H1 (cell line): ENCODE measurements at regions of chr11 and their contacts with region 1.

Region 1: DNA sequence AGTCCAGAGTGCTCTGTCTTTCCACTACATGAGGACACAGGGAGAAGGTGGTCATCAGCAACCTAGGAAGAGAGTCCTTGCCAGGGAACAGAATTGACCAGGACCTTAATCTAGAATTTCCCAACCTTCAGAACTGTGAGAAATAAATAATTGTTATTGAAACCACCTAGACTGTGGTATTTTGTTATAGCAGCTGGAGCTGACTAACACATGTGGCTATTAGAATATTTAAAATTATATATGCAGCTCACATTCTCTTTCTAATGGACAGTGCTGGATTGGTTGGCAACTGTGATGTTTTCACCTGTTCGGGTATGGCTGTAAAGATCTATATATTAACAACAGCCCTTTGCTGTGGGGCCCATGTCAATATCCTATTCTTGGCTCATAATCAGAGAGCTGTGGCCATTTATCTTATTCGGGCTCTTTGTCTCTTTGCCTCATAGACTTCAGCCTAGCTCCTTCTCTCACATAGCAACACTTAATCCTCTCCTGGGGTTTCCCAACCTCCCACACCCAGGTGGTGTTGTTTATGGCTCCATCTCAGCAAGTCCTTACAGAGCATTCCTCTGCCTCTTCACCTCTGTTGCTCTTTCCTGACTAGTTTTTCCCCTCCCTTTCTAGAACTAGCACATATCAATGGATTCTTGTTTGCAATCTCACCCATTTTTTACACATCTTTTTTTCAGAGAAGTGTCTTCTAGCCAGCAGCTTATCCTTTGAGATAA is 46.4 kb upstream of the AMOTL1 start:
- DNase-seq: no peak
- H3K4me3 ChIP-seq: no peak overlapping the region
- H3K27ac ChIP-seq: no peak overlapping the region
- H3K4me1 ChIP-seq: peaks cover 0 to 2% (median 0%) of the 10 kb centered on the region in 4 experiments; a peak in 1 of 7 replicates
- H3K27me3 ChIP-seq: no peaks in the 10 kb centered on the region
- CTCF ChIP-seq: no peak
- EP300 ChIP-seq: no peak
- POLR2A ChIP-seq: no peak
- RAD21 ChIP-seq: no peak

Region 2: DNA sequence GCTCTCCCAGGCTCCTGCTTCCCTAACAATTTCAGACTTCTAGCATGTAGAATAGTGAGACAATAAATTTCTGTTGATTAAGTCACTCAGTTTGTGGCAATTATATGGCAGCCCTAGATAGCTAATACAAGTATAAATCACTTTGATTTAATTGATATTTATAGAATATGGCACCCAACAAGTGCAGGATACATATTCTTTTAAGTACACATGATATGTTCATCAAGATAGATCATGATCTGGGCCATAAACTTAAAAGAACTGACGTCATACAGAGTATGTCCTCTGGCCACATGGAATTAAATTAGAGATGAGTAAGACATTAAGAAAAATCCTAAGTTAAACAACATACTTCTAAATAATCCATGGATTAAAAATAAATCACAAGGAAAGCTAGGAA is 21.1 kb before region 1 on chr11:
- CTCF ChIA-PET with region 1: no interaction called
- POLR2A ChIA-PET with region 1: no interaction called
- DNase-seq: no peak
- H3K4me3 ChIP-seq: no peak overlapping the region
- H3K27ac ChIP-seq: no peak overlapping the region
- H3K4me1 ChIP-seq: no peaks in the 10 kb centered on the region
- H3K27me3 ChIP-seq: no peaks in the 10 kb centered on the region
- CTCF ChIP-seq: no peak
- EP300 ChIP-seq: no peak
- POLR2A ChIP-seq: no peak
- RAD21 ChIP-seq: no peak

Region 3: DNA sequence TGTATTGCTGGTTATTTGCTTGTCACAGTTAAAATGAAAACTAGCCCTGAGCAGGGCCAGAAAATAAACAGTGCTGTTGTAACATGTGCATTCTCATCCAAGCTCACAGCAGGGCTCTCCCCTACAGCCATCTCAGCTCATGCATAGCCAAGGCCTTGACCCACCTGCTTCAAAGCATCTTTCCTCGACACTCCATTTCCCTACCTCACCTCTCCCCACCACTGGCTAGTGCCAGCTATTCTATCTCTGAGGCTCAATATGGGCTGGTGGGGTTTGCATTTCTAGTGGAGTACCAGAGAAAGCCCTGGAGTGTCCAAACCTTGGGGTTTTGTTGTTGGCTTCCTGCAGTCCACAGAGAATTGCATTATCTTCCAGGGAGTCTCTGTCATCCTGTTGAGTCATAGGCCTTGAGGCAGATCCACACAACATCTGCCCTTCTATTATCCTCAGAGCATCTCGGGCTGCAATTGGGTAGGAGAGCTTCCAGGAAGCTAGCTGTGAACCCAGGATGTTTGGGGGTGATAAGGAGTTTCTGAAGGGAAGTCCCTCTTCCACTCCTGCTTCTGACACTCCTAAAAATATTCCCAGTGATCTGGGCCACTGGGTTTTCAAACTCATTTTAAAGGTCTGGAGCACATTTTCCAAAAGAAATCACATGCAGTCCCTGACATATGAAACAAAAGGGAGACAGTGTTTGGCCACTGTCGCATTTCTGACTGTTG is 10.3 kb after region 1 on chr11:
- CTCF ChIA-PET with region 1: interaction called, 19 read pairs
- POLR2A ChIA-PET with region 1: interaction called, 4 read pairs
- DNase-seq: no peak
- H3K4me3 ChIP-seq: no peak overlapping the region
- H3K27ac ChIP-seq: no peak overlapping the region
- H3K4me1 ChIP-seq: peaks cover 5 to 20% (median 15%) of the 10 kb centered on the region in 4 experiments
- H3K27me3 ChIP-seq: peaks cover 0 to 5% (median under 1%) of the 10 kb centered on the region in 4 experiments; a peak in 2 of 7 replicates
- CTCF ChIP-seq: no peak
- EP300 ChIP-seq: no peak
- POLR2A ChIP-seq: no peak
- RAD21 ChIP-seq: no peak

Region 4: DNA sequence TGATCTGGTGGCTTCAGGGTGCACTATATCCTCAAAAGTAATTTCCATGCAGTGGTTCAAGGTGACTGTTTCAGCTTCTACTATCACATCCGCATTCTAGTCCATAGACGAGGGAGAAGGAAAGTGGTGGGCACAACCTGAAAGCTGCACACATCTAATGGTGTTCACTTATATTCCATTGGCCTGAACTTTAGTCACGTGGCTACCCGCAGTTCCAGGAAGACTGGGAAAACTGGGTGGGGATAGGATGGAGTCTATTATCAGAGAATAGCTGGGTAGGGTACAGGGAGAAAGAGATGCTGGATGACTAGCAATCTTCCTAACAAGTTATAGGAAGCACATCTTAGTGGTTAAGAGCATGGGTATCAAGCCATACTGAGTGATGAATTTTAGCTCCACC is 26.5 kb after region 1 on chr11:
- CTCF ChIA-PET with region 1: no interaction called
- POLR2A ChIA-PET with region 1: no interaction called
- DNase-seq: no peak
- H3K4me3 ChIP-seq: no peak overlapping the region
- H3K27ac ChIP-seq: no peak overlapping the region
- H3K4me1 ChIP-seq: peaks cover 0 to 3% (median 0%) of the 10 kb centered on the region in 4 experiments; a peak in 1 of 7 replicates
- H3K27me3 ChIP-seq: no peaks in the 10 kb centered on the region
- CTCF ChIP-seq: no peak
- EP300 ChIP-seq: no peak
- POLR2A ChIP-seq: no peak
- RAD21 ChIP-seq: no peak